HepG2 (cell line): ENCODE measurements at regions of chr12 and their contacts with region 1.

Region 1: GRCh38 chr12:89352492-89353187 is at the start of gene DUSP6:
- DNase-seq: peak; percentile 98
- ATAC-seq: peak; percentile 76
- H3K4me3 ChIP-seq: peak within 1 kb of the TSS; percentile 98 to 99 (median 98)
- H3K27ac ChIP-seq: peak within 1 kb of the TSS; percentile 99
- H3K4me1 ChIP-seq: peaks cover 48% of the 10 kb centered on the region
- H3K27me3 ChIP-seq: peaks cover 0 to 9% of the 10 kb centered on the region in 2 experiments; a peak in 1 of 5 replicates
- CTCF ChIP-seq: 0 out of 2 replicates have a peak, but pooled peaks have one; percentile 8
- EP300 ChIP-seq: peak in 1 of 2 experiments; percentile 92; a peak in 2 of 4 replicates
- POLR2A ChIP-seq: peak in 1 of 2 experiments; percentile 52; a peak in 2 of 4 replicates
- RAD21 ChIP-seq: 0 out of 2 replicates have a peak, but pooled peaks have one; percentile 11
- total RNA-seq, gene DUSP6: 37.0 and 40.9 TPM in 2 replicates

Region 2: GRCh38 chr12:88884600-88884999 is 468.0 kb before region 1 on chr12:
- CTCF ChIA-PET with region 1: no interaction called
- POLR2A ChIA-PET with region 1: no interaction called
- in situ Hi-C with region 1: no loop called
- intact Hi-C with region 1: no loop called
- DNase-seq: no peak
- ATAC-seq: no peak
- H3K4me3 ChIP-seq: no peak overlapping the region
- H3K27ac ChIP-seq: no peak overlapping the region
- H3K4me1 ChIP-seq: no peaks in the 10 kb centered on the region
- H3K27me3 ChIP-seq: no peaks in the 10 kb centered on the region
- CTCF ChIP-seq: no peak
- EP300 ChIP-seq: no peak
- POLR2A ChIP-seq: no peak
- RAD21 ChIP-seq: no peak

Region 3: GRCh38 chr12:89316705-89317139 is 35.9 kb before region 1 on chr12:
- CTCF ChIA-PET with region 1: no interaction called
- POLR2A ChIA-PET with region 1: interaction called, 14 read pairs
- in situ Hi-C with region 1: no loop called
- intact Hi-C with region 1: no loop called
- DNase-seq: no peak
- ATAC-seq: peak; percentile 64
- H3K4me3 ChIP-seq: no peak overlapping the region; a peak in 1 of 6 replicates
- H3K27ac ChIP-seq: no peak overlapping the region
- H3K4me1 ChIP-seq: peaks cover 31% of the 10 kb centered on the region
- H3K27me3 ChIP-seq: no peaks in the 10 kb centered on the region; a peak in 1 of 5 replicates
- CTCF ChIP-seq: no peak
- EP300 ChIP-seq: no peak; a peak in 1 of 4 replicates
- POLR2A ChIP-seq: no peak
- RAD21 ChIP-seq: no peak

Region 4: GRCh38 chr12:89373763-89374572 is 21.3 kb after region 1 on chr12:
- CTCF ChIA-PET with region 1: no interaction called
- POLR2A ChIA-PET with region 1: interaction called, 430 read pairs
- in situ Hi-C with region 1: no loop called
- intact Hi-C with region 1: loop called (anchors 2 kb)
- DNase-seq: no peak
- ATAC-seq: no peak
- H3K4me3 ChIP-seq: no peak overlapping the region
- H3K27ac ChIP-seq: no peak overlapping the region
- H3K4me1 ChIP-seq: peaks cover 87% of the 10 kb centered on the region
- H3K27me3 ChIP-seq: no peaks in the 10 kb centered on the region
- CTCF ChIP-seq: no peak
- EP300 ChIP-seq: no peak
- POLR2A ChIP-seq: no peak
- RAD21 ChIP-seq: no peak

Region 5: DNA sequence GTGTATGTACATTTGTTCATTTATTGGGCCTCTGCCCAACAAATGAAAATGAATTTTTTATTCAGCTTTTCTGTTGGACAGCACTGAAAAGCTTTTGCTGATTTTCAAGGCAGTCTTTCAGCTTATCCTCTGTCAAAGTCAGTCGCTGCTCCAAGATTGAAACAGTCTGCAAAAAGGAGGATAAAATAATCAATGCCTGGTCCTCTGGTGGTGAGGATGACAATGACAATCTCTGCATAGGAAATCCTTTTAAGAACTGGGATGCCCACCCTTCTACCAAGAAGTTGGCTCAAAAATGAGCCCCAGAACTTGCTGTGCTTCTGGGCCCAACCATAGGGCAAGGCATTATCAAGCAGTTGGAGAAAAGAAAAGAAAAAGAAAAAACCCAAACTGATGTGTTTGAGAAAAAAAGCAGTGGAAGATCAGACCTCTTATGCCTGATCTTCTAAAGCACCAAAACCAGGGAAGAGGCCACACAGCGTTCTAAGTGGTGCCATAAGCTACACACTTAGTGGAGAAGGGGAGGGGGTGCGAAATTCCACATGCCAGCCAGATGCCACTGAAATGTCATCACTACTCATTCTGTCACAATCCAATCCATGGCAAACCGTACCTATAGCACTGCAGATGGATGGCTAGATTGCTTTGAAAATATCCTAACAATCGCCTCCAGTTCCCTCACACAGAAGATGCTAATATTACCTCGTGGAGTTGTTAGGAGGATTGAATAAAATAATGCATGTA is 68.6 kb after region 1 on chr12:
- CTCF ChIA-PET with region 1: no interaction called
- POLR2A ChIA-PET with region 1: no interaction called
- in situ Hi-C with region 1: no loop called
- intact Hi-C with region 1: loop called (anchors 1 kb)
- DNase-seq: no peak
- ATAC-seq: peak; percentile 56; the same call in 2 of the 3 replicates
- H3K4me3 ChIP-seq: no peak overlapping the region
- H3K27ac ChIP-seq: no peak overlapping the region
- H3K4me1 ChIP-seq: no peaks in the 10 kb centered on the region
- H3K27me3 ChIP-seq: no peaks in the 10 kb centered on the region
- CTCF ChIP-seq: peak; percentile 37; the same call in 1 of the 2 replicates
- EP300 ChIP-seq: no peak
- POLR2A ChIP-seq: no peak
- RAD21 ChIP-seq: no peak

Region 6: GRCh38 chr12:89524541-89525285 is 172.1 kb after region 1 on chr12 and contains the start of gene GALNT4:
- CTCF ChIA-PET with region 1: no interaction called
- POLR2A ChIA-PET with region 1: interaction called, 27 read pairs
- in situ Hi-C with region 1: loop called (anchors 5 kb)
- intact Hi-C with region 1: loop called (anchors 1 kb)
- DNase-seq: peak; percentile 81
- ATAC-seq: peak; percentile 90
- H3K4me3 ChIP-seq: peak within 1 kb of the TSS; percentile 86 to 96 (median 95)
- H3K27ac ChIP-seq: peak within 1 kb of the TSS; percentile 81
- H3K4me1 ChIP-seq: peaks cover 55% of the 10 kb centered on the region
- H3K27me3 ChIP-seq: no peaks in the 10 kb centered on the region
- CTCF ChIP-seq: peak; percentile 83
- EP300 ChIP-seq: no peak
- POLR2A ChIP-seq: peak; percentile 62 to 83
- RAD21 ChIP-seq: 0 out of 2 replicates have a peak, but pooled peaks have one; percentile 16
- total RNA-seq, gene GALNT4: 5.2 and 6.8 TPM in 2 replicates